Heart right ventricle (tissue), 16 donors: ENCODE measurements at regions of chr18 and their contacts with region 1.

Region 1: DNA sequence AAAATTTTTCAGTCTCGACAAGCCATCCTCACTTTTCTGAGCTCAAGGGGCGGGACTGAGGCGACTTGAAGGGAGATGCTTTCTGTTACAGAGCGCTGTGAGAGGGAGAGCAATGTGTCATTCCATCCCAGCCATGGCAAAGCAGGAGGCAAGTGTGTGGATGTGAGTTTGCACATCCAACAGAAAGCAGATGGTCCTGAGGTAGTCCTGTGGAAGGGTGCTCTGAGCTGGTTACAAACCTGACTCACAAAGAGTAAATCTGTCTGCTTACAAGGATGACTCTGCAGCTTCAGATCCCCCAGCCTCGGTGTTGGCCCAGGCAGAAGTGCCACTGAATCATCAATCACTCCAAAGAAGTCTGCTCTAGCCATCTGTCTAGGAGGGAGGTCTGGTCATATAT is 482.0 kb upstream of the DCC start:
- DNase-seq: no peak
- ATAC-seq: no peak
- H3K4me3 ChIP-seq: no peak overlapping the region
- H3K27ac ChIP-seq: no peak overlapping the region
- H3K4me1 ChIP-seq: no peaks in the 10 kb centered on the region
- H3K27me3 ChIP-seq: no peaks in the 10 kb centered on the region
- CTCF ChIP-seq: no peak

Region 2: DNA sequence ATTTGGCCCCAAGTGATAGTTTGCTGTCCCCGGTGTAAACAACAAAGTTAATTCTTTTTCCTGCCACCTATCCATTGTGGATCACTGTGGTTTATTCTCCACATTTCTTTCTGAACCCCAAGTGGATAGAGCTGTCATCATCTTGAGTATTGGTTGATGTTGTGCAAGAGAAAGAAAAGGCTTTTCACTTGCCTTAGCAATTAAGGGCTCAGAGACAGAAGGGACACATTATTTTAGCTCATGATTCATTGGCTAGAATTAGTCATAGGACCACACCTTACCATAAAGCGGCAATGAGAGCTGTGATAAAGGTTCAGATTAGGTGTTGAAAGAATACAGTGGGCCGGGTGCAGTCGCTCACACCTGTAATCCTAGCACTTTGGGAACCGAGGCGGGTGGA is 39.9 kb after region 1 on chr18:
- intact Hi-C with region 1: loop called in 1 of 10 experiments (anchors 2 kb)
- DNase-seq: no peak
- ATAC-seq: no peak
- H3K4me3 ChIP-seq: no peak overlapping the region
- H3K27ac ChIP-seq: no peak overlapping the region
- H3K4me1 ChIP-seq: no peaks in the 10 kb centered on the region
- H3K27me3 ChIP-seq: no peaks in the 10 kb centered on the region
- CTCF ChIP-seq: no peak